CD8-positive, alpha-beta T cell (primary cell): ENCODE measurements at regions of chr17 and their contacts with region 1.

Region 1: GRCh38 chr17:17041571-17042380 is 481 bp upstream of the MPRIP start:
- DNase-seq: peak; percentile 93 to 99 (median 98)
- ATAC-seq: peak; percentile 97
- H3K4me3 ChIP-seq: peak overlapping the region; percentile 51 to 70
- H3K4me3 Mint-ChIP-seq: peak overlapping the region; percentile 70
- H3K27ac ChIP-seq: peak overlapping the region in 1 of 2 experiments; percentile 40
- H3K27ac Mint-ChIP-seq: peak overlapping the region; percentile 28
- H3K4me1 ChIP-seq: peaks cover 35% of the 10 kb centered on the region
- H3K4me1 Mint-ChIP-seq: peaks cover 44% of the 10 kb centered on the region
- H3K27me3 ChIP-seq: no peaks in the 10 kb centered on the region
- H3K27me3 Mint-ChIP-seq: no peaks in the 10 kb centered on the region
- CTCF ChIP-seq: no peak

Region 2: DNA sequence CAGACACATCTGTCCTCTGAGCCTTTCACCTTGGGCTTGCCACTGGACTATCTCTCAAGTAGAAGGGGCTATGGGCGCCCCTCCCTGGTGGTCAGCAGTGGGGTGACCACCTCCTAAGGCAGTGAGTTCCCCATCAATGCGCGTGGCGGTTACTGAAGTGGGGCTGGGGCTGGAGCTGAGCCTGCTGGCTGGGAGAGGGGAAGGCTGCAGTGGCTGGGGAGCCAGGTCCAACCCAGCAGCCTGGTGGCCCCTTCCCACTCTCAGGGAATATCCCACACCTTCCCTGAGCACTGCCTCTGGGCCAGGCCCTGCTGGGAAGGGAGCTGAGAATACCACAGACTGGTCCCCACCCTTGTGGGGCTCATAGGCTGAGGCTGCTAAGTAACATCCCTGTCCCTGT is 19.3 kb before region 1 on chr17:
- CTCF ChIA-PET with region 1: no interaction called
- POLR2A ChIA-PET with region 1: no interaction called
- intact Hi-C with region 1: no loop called
- DNase-seq: no peak
- ATAC-seq: no peak
- H3K4me3 ChIP-seq: no peak overlapping the region
- H3K4me3 Mint-ChIP-seq: no peak overlapping the region
- H3K27ac ChIP-seq: no peak overlapping the region
- H3K27ac Mint-ChIP-seq: no peak overlapping the region
- H3K4me1 ChIP-seq: peaks cover 3% of the 10 kb centered on the region
- H3K4me1 Mint-ChIP-seq: peaks cover 3% of the 10 kb centered on the region
- H3K27me3 ChIP-seq: no peaks in the 10 kb centered on the region
- H3K27me3 Mint-ChIP-seq: no peaks in the 10 kb centered on the region
- CTCF ChIP-seq: no peak

Region 3: DNA sequence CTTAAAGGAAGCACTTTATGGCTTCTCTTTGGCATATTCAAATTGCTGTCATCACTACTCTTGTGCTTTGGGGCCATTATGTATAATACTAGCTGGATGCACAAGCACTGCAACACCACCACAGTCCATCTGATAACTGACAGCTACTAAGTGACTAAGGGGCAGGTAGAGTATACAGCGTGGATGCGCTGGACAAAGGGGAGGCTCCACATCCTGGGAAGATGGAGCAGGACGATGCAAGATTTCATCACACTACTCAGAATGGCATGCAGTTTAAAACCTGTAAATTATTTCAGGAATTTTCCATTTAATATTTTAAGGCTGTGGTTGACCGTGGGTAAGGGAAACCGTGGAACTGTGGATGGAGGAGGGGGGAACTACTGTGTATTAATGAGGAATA is 25.5 kb after region 1 on chr17:
- CTCF ChIA-PET with region 1: no interaction called
- POLR2A ChIA-PET with region 1: no interaction called
- intact Hi-C with region 1: loop called in 1 of 2 experiments (anchors 2 kb)
- DNase-seq: no peak
- ATAC-seq: no peak
- H3K4me3 ChIP-seq: no peak overlapping the region
- H3K4me3 Mint-ChIP-seq: no peak overlapping the region
- H3K27ac ChIP-seq: no peak overlapping the region
- H3K27ac Mint-ChIP-seq: no peak overlapping the region
- H3K4me1 ChIP-seq: peaks cover 30% of the 10 kb centered on the region
- H3K4me1 Mint-ChIP-seq: peaks cover 73% of the 10 kb centered on the region
- H3K27me3 ChIP-seq: no peaks in the 10 kb centered on the region
- H3K27me3 Mint-ChIP-seq: no peaks in the 10 kb centered on the region
- CTCF ChIP-seq: no peak

Region 4: GRCh38 chr17:17079751-17080150 is 38.0 kb after region 1 on chr17:
- CTCF ChIA-PET with region 1: no interaction called
- POLR2A ChIA-PET with region 1: no interaction called
- intact Hi-C with region 1: no loop called
- DNase-seq: no peak
- ATAC-seq: no peak
- H3K4me3 ChIP-seq: no peak overlapping the region
- H3K4me3 Mint-ChIP-seq: no peak overlapping the region
- H3K27ac ChIP-seq: no peak overlapping the region
- H3K27ac Mint-ChIP-seq: no peak overlapping the region
- H3K4me1 ChIP-seq: no peaks in the 10 kb centered on the region
- H3K4me1 Mint-ChIP-seq: peaks cover 20% of the 10 kb centered on the region
- H3K27me3 ChIP-seq: no peaks in the 10 kb centered on the region
- H3K27me3 Mint-ChIP-seq: no peaks in the 10 kb centered on the region
- CTCF ChIP-seq: no peak

Region 5: DNA sequence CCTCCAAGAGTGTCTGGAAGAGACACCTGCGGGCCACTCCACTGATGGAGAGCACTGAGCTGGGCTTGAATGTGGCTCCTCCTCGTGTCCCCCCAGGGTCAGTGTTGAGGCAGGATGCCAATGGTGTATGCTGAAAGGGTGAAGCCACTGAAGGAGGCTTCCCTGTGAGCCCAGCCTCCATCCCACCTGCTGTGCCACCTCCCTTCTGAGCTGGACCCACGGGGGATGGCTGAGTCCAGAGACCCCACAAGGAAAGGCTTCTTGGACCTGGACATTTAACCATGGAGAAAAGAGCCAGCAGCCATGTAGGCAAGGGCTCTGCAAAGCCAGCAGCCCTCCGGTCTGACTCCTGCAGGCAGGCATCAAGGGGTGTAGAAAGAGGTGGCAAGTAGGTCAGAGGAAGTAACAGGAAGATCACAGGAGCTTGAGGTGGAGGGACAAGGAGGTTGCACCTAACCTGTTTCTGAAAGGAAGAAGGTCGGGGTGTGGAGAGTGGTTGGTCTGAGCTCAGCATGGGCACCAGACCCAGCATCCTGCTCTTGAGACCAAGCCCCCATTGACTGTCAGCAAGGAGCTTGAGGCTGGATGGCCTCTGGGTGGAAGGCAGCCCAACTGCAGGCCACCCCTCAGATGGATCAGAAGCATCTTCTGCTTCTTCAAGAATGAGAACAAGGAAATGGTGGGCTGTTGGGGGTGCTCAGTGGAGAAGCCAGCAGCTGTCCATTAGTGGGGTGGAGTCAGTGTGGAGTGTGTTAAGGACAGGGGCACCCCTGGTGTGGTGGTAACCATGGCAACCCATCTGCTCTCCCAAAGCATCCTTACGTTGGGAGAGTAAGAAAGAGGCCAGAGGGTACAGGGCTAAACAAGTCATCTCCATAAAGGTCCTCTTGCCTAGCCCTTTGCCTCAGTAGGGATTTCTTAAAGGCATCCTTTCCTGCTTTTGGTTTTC is 83.6 kb after region 1 on chr17:
- CTCF ChIA-PET with region 1: interaction called, 3 read pairs
- POLR2A ChIA-PET with region 1: no interaction called
- intact Hi-C with region 1: loop called in 1 of 2 experiments (anchors 5 kb)
- DNase-seq: peak in 6 of 9 experiments; percentile 18 to 75 (median 56)
- ATAC-seq: peak; percentile 73
- H3K4me3 ChIP-seq: peak overlapping the region; percentile 25 to 38
- H3K4me3 Mint-ChIP-seq: peak overlapping the region; percentile 80
- H3K27ac ChIP-seq: peak overlapping the region; percentile 14 to 84
- H3K27ac Mint-ChIP-seq: peak overlapping the region; percentile 87
- H3K4me1 ChIP-seq: peaks cover 56% of the 10 kb centered on the region
- H3K4me1 Mint-ChIP-seq: peaks cover 74% of the 10 kb centered on the region
- H3K27me3 ChIP-seq: no peaks in the 10 kb centered on the region
- H3K27me3 Mint-ChIP-seq: no peaks in the 10 kb centered on the region
- CTCF ChIP-seq: no peak

Region 6: GRCh38 chr17:17206124-17206912 is 164.5 kb after region 1 on chr17 and contains the start of gene PLD6:
- CTCF ChIA-PET with region 1: no interaction called
- POLR2A ChIA-PET with region 1: no interaction called
- intact Hi-C with region 1: loop called in 1 of 2 experiments (anchors 1 kb)
- DNase-seq: peak; percentile 72 to 96 (median 94)
- ATAC-seq: peak; percentile 79
- H3K4me3 ChIP-seq: peak within 1 kb of the TSS; percentile 48 to 75
- H3K4me3 Mint-ChIP-seq: peak within 1 kb of the TSS; percentile 86
- H3K27ac ChIP-seq: peak within 1 kb of the TSS; percentile 41 to 59
- H3K27ac Mint-ChIP-seq: peak within 1 kb of the TSS; percentile 92
- H3K4me1 ChIP-seq: peaks cover 21% of the 10 kb centered on the region
- H3K4me1 Mint-ChIP-seq: peaks cover 29% of the 10 kb centered on the region
- H3K27me3 ChIP-seq: no peaks in the 10 kb centered on the region
- H3K27me3 Mint-ChIP-seq: no peaks in the 10 kb centered on the region
- CTCF ChIP-seq: no peak
- total RNA-seq, gene PLD6: 3.2 to 3.3 TPM

Region 7: DNA sequence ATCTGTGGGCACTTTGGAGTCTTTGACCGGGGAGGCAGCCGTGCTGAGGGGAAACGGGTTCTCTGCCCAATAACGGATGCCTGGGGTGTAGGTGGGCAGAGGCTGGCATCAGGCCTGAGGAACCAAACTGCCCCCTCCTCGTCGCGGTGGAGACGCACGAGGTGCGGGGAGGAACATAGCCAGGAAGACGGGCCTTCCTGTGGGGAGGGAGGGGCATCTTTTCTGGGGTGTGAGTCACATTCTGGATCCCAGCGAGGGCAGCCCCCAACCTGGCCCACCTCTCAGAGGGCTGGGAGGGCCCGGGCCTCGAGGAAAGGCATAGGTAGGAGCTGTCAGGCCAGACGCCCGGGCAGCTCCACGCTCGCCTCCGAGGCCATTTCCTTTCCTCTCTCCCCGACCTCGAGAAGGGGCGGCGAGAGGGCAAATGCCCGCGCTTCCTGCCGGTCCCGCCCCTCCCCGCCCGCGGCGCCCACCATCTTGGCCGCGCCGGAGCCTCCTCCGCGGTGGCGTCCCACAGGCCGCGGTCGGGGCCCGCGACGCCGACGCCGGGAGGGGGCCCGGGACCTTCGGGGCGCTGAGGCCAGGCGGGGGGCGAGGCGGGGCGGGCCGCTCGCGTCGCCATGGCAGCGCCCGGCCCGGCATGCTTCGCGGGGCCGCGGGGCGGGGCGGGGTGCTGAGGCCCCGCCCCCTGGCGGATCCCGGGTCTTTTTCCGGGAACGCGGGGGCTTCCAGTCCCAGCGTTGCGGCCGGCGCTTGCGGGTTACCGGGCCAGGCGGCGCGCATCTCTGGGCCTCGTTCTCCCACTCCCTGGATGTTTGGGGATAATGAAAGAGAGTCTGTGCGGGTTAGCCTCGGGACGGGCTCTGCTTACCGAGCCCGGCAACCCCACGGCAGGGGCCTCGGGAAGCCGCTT is 652.6 kb after region 1 on chr17:
- CTCF ChIA-PET with region 1: no interaction called
- POLR2A ChIA-PET with region 1: no interaction called
- intact Hi-C with region 1: loop called in 1 of 2 experiments (anchors 5 kb)
- DNase-seq: peak; percentile 25 to 87 (median 76)
- ATAC-seq: peak; percentile 72
- H3K4me3 ChIP-seq: peak overlapping the region; percentile 83 to 91
- H3K4me3 Mint-ChIP-seq: peak overlapping the region; percentile 86
- H3K27ac ChIP-seq: peak overlapping the region; percentile 88 to 97
- H3K27ac Mint-ChIP-seq: peak overlapping the region; percentile 99
- H3K4me1 ChIP-seq: peaks cover 52% of the 10 kb centered on the region
- H3K4me1 Mint-ChIP-seq: peaks cover 68% of the 10 kb centered on the region
- H3K27me3 ChIP-seq: no peaks in the 10 kb centered on the region
- H3K27me3 Mint-ChIP-seq: no peaks in the 10 kb centered on the region
- CTCF ChIP-seq: no peak